ENCODE measurements at regions of chr14 and their contacts with region 1.

Region 1: GRCh38 chr14:24806061-24806678 is 172.2 kb upstream of the GZMB start:
- DNase-seq: peak; percentile 81
- ATAC-seq: peak; percentile 84

Region 2: DNA sequence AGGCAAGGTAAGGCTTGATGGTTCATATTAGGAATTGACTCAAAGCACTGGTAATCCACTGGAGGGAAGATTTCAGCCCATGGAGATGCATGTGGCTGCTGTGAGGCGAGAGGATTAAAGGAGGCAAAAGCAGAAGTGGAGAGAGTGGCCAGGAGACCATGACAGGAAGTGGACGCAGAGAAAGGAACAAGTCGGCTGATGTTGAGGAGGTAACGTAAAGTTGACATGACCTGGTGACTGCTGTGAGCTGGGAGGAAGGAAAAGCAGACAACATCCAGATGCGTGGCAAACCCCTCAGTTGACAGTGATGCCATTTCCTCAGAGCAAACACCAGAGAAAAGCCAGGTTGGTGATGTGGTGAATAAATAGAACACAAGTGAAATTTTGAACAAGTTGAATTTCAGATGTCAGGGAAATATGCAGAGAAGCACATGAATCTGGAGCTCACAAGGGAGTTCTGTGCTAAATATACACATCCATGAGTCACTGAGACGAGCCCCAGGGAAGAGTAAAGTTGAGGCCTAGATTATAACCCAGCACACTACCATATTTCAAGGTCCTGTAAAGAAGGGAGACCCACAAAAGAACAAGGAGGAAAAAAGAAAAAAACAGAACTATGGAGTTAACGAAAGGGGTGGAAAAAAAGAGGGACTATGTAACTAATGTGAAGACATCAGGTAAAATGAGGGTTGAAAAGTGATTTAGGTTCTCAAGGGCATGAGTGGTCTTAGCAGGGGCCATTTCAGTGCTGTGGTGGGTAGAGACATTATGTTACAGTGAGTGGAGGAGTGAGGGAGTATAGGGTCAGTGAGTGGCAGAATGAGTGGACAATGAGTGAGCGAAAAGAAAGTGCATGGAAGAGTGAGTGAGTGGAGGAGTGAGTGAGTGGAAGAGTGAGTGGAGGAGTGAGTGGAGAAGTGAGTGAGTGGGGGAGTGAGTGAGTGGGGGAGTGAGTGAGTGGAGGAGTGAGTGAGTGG is 110.6 kb before region 1 on chr14:
- intact Hi-C with region 1: no loop called
- DNase-seq: no peak
- ATAC-seq: no peak

Region 3: GRCh38 chr14:25132732-25133422 is 326.7 kb after region 1 on chr14:
- intact Hi-C with region 1: loop called (anchors 5 kb)
- DNase-seq: peak; percentile 67
- ATAC-seq: peak; percentile 98